ENCODE measurements at regions of chr11 and their contacts with region 1.

Region 1: DNA sequence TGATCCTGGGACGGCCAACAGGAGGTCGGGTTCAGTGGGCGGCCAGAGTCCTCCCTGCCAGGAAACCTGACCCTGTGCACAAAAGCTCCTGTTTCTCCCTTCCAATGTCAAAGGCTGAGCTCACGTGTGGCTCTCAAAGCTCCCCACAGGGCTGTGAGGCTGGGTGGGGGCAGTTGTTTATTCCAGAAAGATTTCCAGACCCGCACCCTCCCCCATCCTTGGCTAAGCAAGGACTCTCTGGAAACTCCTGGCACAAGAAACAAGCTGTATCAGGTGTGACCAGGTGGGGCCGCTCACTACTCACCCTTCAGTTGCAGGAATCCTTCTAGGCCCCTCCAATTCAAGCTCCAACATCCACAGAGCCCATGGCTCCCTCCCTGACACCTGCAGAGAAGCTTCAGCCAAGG is 131.9 kb downstream of the SHANK2 start:
- DNase-seq: peak; percentile 70
- H3K4me3 ChIP-seq: no peak overlapping the region
- H3K4me3 Mint-ChIP-seq: no peak overlapping the region
- H3K27ac Mint-ChIP-seq: no peak overlapping the region
- H3K4me1 ChIP-seq: peaks cover 19% of the 10 kb centered on the region
- H3K4me1 Mint-ChIP-seq: peaks cover 14% of the 10 kb centered on the region
- H3K27me3 ChIP-seq: no peaks in the 10 kb centered on the region
- H3K27me3 Mint-ChIP-seq: no peaks in the 10 kb centered on the region
- CTCF ChIP-seq: peak; percentile 54 to 81

Region 2: DNA sequence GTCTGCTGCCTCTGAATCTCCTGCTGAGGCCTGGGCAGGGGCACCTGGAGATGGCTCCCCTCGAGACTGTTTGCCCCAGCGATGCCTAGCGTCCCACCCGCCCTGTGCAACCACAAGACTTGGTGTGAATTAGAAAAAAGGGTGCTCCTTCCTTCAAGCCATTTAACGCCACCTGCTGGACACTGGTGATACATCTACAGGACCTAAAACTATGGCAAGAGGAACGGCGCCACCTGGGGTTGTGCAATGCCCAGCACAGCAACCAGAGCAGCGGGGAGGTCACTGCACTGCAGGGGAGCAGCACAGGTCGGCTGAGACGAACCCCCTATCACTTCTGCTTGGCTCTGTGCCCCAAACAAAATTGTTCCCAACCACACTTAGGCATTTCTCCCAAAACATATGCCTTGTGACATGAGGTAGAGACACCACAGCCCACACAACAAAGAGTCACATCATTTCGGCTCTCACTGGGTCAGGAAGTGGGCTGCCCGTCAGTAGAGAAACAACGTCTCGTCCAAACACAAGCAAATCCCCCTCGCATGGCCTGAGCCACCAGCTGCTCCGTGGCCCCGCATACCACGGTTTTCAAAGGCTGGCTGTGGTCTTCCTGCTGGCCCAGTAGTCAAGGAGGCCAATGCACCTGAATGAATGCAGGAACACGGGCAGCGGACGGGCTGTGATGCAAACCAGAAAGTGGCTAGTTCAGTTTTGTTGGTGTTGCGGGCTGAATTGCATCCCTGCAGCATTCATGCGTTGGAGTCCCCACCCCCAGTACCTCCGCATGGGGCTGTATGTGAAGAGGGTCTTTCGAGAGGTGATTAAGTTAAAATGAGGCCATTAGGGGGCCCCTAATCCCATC is 40.0 kb before region 1 on chr11:
- CTCF ChIA-PET with region 1: no interaction called
- POLR2A ChIA-PET with region 1: no interaction called
- intact Hi-C with region 1: no loop called
- DNase-seq: peak; percentile 85 to 87
- H3K4me3 ChIP-seq: no peak overlapping the region
- H3K4me3 Mint-ChIP-seq: no peak overlapping the region
- H3K27ac Mint-ChIP-seq: no peak overlapping the region
- H3K4me1 ChIP-seq: no peaks in the 10 kb centered on the region
- H3K4me1 Mint-ChIP-seq: peaks cover 14% of the 10 kb centered on the region
- H3K27me3 ChIP-seq: no peaks in the 10 kb centered on the region
- H3K27me3 Mint-ChIP-seq: no peaks in the 10 kb centered on the region
- CTCF ChIP-seq: peak; percentile 95

Region 3: DNA sequence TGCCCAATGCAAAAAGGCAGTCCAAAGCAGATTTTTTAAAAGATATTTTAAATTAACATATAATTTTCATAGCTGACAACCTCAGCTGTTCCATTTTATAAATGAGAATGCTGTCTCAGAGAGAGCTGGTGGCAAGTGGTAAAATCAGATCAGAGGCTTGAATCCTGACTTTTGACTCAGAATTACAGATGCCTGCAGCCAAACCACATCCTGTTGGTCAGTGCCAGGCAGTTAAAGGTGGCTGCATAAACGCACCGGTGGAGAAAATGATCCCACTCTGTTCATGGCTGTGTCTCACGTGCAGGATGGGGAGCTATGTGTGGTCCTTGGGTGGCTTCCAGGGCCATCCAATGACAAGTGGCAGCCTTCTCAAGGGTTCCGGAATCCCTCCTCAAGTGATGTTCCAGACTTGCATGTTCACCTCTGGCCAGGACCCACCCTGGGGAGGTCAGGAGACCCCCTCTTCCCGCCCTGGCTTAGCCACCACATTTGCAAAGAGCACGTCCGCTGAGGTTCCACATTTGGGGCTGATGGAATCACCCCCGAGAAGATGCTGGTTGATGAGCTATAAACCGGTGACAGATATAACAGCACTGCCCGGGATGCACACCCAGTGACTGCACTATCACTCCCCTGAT is 23.6 kb before region 1 on chr11:
- CTCF ChIA-PET with region 1: no interaction called
- POLR2A ChIA-PET with region 1: no interaction called
- intact Hi-C with region 1: no loop called
- DNase-seq: no peak
- H3K4me3 ChIP-seq: no peak overlapping the region
- H3K4me3 Mint-ChIP-seq: no peak overlapping the region
- H3K27ac Mint-ChIP-seq: no peak overlapping the region
- H3K4me1 ChIP-seq: no peaks in the 10 kb centered on the region
- H3K4me1 Mint-ChIP-seq: no peaks in the 10 kb centered on the region
- H3K27me3 ChIP-seq: no peaks in the 10 kb centered on the region
- H3K27me3 Mint-ChIP-seq: no peaks in the 10 kb centered on the region
- CTCF ChIP-seq: no peak

Region 4: GRCh38 chr11:71165771-71166170 is 45.3 kb after region 1 on chr11:
- CTCF ChIA-PET with region 1: no interaction called
- POLR2A ChIA-PET with region 1: no interaction called
- intact Hi-C with region 1: no loop called
- DNase-seq: no peak
- H3K4me3 ChIP-seq: no peak overlapping the region
- H3K4me3 Mint-ChIP-seq: no peak overlapping the region
- H3K27ac Mint-ChIP-seq: no peak overlapping the region
- H3K4me1 ChIP-seq: peaks cover 20% of the 10 kb centered on the region
- H3K4me1 Mint-ChIP-seq: peaks cover 27% of the 10 kb centered on the region
- H3K27me3 ChIP-seq: no peaks in the 10 kb centered on the region
- H3K27me3 Mint-ChIP-seq: no peaks in the 10 kb centered on the region
- CTCF ChIP-seq: no peak

Region 5: GRCh38 chr11:71329165-71329510 is 208.6 kb after region 1 on chr11:
- CTCF ChIA-PET with region 1: interaction called, 14 read pairs
- POLR2A ChIA-PET with region 1: interaction called, 5 read pairs
- intact Hi-C with region 1: no loop called
- DNase-seq: no peak
- H3K4me3 ChIP-seq: no peak overlapping the region
- H3K4me3 Mint-ChIP-seq: no peak overlapping the region
- H3K27ac Mint-ChIP-seq: no peak overlapping the region
- H3K4me1 ChIP-seq: no peaks in the 10 kb centered on the region
- H3K4me1 Mint-ChIP-seq: no peaks in the 10 kb centered on the region
- H3K27me3 ChIP-seq: no peaks in the 10 kb centered on the region
- H3K27me3 Mint-ChIP-seq: no peaks in the 10 kb centered on the region
- CTCF ChIP-seq: no peak

Region 6: GRCh38 chr11:71342951-71343827 is 222.7 kb after region 1 on chr11:
- CTCF ChIA-PET with region 1: no interaction called
- POLR2A ChIA-PET with region 1: no interaction called
- intact Hi-C with region 1: loop called (anchors 1 kb)
- DNase-seq: peak; percentile 84 to 85
- H3K4me3 ChIP-seq: no peak overlapping the region
- H3K4me3 Mint-ChIP-seq: no peak overlapping the region
- H3K27ac Mint-ChIP-seq: no peak overlapping the region
- H3K4me1 ChIP-seq: peaks cover 8% of the 10 kb centered on the region; the same call in 1 of the 2 replicates
- H3K4me1 Mint-ChIP-seq: peaks cover 6% of the 10 kb centered on the region
- H3K27me3 ChIP-seq: no peaks in the 10 kb centered on the region
- H3K27me3 Mint-ChIP-seq: peaks cover 9% of the 10 kb centered on the region
- CTCF ChIP-seq: peak; percentile 87 to 94

Region 7: GRCh38 chr11:71372693-71373657 is 252.5 kb after region 1 on chr11:
- CTCF ChIA-PET with region 1: interaction called, 8 read pairs
- POLR2A ChIA-PET with region 1: no interaction called
- intact Hi-C with region 1: loop called (anchors 2 kb)
- DNase-seq: peak in 1 of 2 experiments; percentile 60
- H3K4me3 ChIP-seq: no peak overlapping the region
- H3K4me3 Mint-ChIP-seq: no peak overlapping the region
- H3K27ac Mint-ChIP-seq: no peak overlapping the region
- H3K4me1 ChIP-seq: no peaks in the 10 kb centered on the region
- H3K4me1 Mint-ChIP-seq: no peaks in the 10 kb centered on the region
- H3K27me3 ChIP-seq: no peaks in the 10 kb centered on the region
- H3K27me3 Mint-ChIP-seq: peaks cover 11% of the 10 kb centered on the region
- CTCF ChIP-seq: peak; percentile 74 to 90

Region 8: DNA sequence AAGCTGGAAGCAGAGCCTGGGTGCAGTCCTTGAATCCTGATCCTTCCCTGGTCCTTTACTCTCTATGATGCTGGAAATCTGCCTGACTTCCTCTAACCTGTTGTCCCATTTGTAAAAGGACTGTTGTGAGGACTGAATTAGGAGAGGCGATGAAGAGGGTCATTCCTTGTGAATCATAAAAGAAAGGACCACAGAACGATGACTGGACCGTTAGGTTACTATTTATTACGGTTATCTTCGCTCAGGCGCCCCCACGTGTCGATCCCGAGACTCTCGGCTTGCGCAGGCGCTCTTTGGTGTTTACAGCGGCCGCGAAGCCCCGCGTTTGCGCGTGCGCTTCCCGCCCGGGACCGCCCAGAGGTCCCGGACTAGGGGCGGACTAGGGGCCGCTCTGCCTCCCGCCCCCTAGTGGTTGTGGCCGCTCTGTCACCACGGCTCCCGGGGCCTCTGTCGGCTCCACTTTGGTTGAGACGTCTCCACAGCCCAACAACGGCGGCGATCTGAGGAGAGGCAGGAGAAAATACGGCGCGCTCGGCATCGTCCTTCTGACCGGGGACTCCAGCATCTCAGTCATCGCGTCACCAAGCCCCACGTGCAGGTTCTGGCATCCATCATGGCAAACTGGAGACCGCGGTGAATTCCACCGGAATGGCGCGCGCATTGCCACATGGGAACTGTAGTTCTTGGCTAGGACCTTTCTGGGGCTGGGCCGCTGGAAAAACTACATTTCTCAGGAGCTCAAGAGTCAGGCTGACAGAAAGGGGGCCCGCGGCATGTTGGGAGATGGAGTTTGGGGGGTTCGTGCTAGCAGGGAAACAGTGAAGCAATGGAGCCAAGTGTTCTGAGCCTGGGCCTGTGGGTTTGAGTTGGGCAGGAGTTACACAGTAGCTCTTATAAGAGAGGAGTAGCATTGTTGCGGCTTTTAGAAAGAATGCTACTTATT is 1673.2 kb after region 1 on chr11 and contains the start of gene STARD10:
- CTCF ChIA-PET with region 1: no interaction called
- POLR2A ChIA-PET with region 1: no interaction called
- intact Hi-C with region 1: no loop called
- DNase-seq: peak; percentile 97 to 99
- H3K4me3 ChIP-seq: peak within 1 kb of the TSS; percentile 66
- H3K4me3 Mint-ChIP-seq: peak within 1 kb of the TSS; percentile 82
- H3K27ac Mint-ChIP-seq: peak within 1 kb of the TSS; percentile 91
- H3K4me1 ChIP-seq: peaks cover 26% of the 10 kb centered on the region
- H3K4me1 Mint-ChIP-seq: peaks cover 21% of the 10 kb centered on the region
- H3K27me3 ChIP-seq: no peaks in the 10 kb centered on the region
- H3K27me3 Mint-ChIP-seq: no peaks in the 10 kb centered on the region
- CTCF ChIP-seq: peak; percentile 99 to 100
- total RNA-seq, gene STARD10: 492 and 501 TPM in 2 replicates